Left ventricle myocardium inferior (tissue), 1 donor: ENCODE measurements at regions of chr18 and their contacts with region 1.

Region 1: DNA sequence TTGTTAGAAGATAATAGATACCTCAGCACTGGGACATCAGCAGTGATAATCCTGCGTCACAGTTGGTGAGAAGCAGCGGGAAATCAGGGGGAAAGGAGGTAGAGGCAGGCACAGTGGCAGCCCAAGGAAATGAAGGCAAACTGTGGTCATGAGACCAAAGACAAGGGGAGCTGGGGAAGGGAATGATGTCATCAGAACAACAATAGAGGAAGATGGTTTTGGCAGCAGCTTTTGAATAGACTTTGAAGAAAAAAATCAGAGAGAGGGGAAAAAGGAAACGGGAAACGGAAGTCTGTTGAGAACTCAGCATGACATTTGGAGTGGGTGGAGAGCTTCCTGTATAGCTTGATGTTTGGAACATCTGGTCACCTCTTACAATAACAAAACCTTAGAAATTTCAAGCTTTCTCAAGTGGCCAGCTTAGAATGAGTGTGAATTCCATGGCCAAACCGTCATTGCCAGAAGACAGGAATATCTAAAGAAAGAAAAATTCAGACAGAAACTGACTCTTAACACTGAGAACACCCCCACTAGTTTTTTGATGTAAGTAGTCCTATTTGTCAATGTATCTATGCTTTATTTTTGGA is 18.4 kb upstream of the YES1 start:
- DNase-seq: no peak
- H3K4me3 ChIP-seq: no peak overlapping the region
- H3K27ac ChIP-seq: peak overlapping the region; percentile 61
- H3K4me1 ChIP-seq: peaks cover 27% of the 10 kb centered on the region
- H3K27me3 ChIP-seq: no peaks in the 10 kb centered on the region
- CTCF ChIP-seq: no peak

Region 2: DNA sequence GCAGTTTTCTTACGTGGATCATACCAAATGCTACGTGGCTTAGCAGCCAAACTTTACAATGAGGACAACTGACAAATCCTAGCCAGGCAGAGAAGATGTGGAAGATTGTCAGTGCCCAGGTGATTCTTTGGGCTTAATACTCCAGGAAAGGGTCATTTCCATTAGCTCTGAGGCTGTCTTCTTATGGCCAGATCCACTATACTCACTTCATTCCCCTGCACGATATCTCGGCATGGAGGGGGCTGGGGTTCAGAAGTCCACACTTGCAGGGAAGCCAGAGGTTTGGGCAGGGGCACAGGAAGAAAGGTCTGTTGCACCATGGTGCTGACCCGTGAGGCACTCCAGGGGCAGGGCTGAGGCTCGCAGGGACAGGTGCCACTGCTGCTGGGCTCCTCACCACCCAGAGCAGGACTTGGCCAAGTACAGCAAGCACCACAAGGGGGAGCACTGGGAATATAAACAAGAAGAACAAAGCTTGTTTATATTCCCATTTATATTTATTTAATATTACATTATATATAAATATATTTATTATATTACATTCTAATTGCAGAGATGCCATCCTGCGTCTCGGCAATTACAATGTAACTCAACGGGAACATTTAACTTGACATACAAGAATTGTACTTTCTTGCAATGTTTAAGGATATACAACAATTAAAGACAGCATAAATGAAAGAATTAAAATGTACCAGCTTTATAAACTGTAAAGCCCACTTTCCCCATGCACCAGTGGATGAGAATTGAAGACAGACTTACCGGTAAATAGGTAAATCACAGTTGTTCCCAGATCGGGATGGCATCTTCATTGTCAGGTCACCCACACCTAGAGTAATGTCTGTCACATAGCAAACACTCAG is 206.4 kb before region 1 on chr18:
- intact Hi-C with region 1: loop called (anchors 2 kb)
- DNase-seq: peak; percentile 30
- H3K4me3 ChIP-seq: no peak overlapping the region
- H3K27ac ChIP-seq: no peak overlapping the region
- H3K4me1 ChIP-seq: no peaks in the 10 kb centered on the region
- H3K27me3 ChIP-seq: peaks cover 11% of the 10 kb centered on the region
- CTCF ChIP-seq: peak; percentile 79

Region 3: DNA sequence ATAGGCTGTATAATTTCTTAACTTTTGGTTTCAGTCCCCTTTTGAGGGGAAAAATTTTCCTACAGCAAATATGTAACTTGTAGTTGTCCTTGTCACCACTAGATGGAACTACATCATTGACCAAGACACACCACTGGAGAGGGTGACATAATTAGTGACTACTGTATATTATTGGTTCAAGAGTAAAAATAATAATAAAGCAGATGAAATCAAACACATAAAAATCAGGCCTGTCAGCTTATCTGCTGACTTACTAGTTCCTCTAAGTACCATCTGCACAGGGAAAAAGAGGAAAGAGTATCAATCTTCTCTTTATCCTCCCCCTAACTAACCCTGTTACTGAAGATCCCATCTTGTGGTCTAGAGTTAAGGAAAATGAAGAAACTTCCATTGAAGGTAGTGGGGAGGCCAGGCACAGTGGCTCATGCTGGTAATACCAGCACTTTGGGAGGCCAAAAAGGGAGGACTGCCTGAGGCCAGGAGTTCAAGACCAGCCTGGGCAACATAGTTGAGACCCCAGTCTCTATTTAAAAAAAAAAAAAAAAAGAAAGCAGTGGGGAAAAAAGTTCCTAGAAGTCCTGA is 88.4 kb before region 1 on chr18:
- intact Hi-C with region 1: loop called (anchors 1 kb)
- DNase-seq: no peak
- H3K4me3 ChIP-seq: no peak overlapping the region
- H3K27ac ChIP-seq: no peak overlapping the region
- H3K4me1 ChIP-seq: no peaks in the 10 kb centered on the region
- H3K27me3 ChIP-seq: no peaks in the 10 kb centered on the region
- CTCF ChIP-seq: peak; percentile 87

Region 4: DNA sequence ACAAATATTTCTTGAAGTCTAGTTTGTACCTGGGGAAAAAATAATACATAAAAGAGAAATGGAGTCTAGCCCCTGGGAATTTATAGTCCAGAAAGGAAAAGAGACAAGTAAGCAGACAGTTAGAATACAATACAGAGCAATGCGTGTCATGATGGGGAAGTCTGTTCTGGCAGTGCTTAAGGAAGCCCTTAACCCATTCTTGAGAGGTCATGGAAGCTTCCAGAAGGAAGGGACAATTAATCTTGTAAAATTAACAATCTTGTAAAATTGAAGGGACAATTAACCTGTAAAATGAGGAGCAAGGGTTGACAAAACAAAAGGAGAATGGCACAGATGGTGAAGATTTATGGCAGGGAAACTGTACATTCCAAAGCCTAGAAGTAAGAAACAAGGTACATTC is 1674.2 kb after region 1 on chr18:
- intact Hi-C with region 1: no loop called
- DNase-seq: no peak
- H3K4me3 ChIP-seq: no peak overlapping the region
- H3K27ac ChIP-seq: no peak overlapping the region
- H3K4me1 ChIP-seq: no peaks in the 10 kb centered on the region
- H3K27me3 ChIP-seq: no peaks in the 10 kb centered on the region
- CTCF ChIP-seq: no peak